ENCODE measurements at regions of chr6 and their contacts with region 1.

Region 1: DNA sequence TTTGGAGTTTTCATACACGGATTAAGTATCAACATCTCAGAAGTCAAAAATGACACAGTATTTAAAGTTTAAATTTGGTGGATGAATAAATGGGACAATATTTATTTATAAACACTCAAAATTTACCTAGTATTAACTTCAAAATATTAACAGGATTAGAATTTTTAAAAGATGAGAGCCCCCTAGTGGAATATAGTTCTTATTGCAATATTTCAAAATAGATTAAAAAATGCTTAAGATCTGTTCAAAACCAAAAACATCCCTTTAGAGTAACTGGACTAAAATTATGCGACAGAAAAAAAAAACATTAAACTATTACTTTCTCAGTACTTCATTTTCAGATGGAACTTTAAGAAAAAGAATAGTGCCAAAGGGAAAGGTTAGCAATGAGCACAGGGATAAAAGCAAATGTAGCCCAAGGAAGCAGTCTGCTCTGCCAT is 56.6 kb downstream of the SNX14 start:
- DNase-seq: no peak
- H3K4me3 ChIP-seq: no peak overlapping the region
- H3K27ac ChIP-seq: no peak overlapping the region
- H3K4me1 ChIP-seq: no peaks in the 10 kb centered on the region
- H3K27me3 ChIP-seq: no peaks in the 10 kb centered on the region
- CTCF ChIP-seq: peak; percentile 43 to 44

Region 2: GRCh38 chr6:85354761-85355618 is 182.1 kb before region 1 on chr6:
- CTCF ChIA-PET with region 1: no interaction called
- dilution Hi-C with region 1: no loop called
- in situ Hi-C with region 1: no loop called
- intact Hi-C with region 1: loop called (anchors 1 kb)
- DNase-seq: peak; percentile 64
- H3K4me3 ChIP-seq: no peak overlapping the region
- H3K27ac ChIP-seq: no peak overlapping the region
- H3K4me1 ChIP-seq: peaks cover 6% of the 10 kb centered on the region
- H3K27me3 ChIP-seq: no peaks in the 10 kb centered on the region
- CTCF ChIP-seq: peak; percentile 91 to 96